ENCODE measurements at regions of chr6 and their contacts with region 1.

Region 1: GRCh38 chr6:168895102-168895812 is 358.4 kb downstream of the THBS2 start:
- DNase-seq: peak; percentile 87
- ATAC-seq: peak; percentile 87

Region 2: DNA sequence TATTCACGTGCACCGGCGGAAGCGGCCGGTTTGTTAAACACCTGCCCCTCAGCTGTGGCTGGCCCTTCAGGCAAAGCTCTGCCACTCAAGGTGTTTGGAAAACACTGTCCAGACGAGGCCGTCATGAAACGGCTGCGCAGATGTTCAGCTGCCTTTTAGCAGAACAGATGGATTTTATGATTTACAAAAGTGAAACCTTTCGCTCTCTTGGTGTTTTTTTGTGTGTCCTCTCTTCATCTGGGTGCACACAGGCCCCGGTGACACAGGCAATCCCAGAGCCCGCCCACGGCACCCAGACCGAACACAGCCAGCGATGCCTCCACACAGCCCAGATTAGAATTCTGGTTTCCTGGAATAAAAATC is 57.2 kb before region 1 on chr6:
- intact Hi-C with region 1: no loop called
- DNase-seq: no peak
- ATAC-seq: peak; percentile 45

Region 3: GRCh38 chr6:168937054-168937453 is 41.8 kb after region 1 on chr6:
- intact Hi-C with region 1: no loop called
- DNase-seq: no peak
- ATAC-seq: no peak

Region 4: GRCh38 chr6:169058634-169059033 is 163.4 kb after region 1 on chr6:
- intact Hi-C with region 1: no loop called
- DNase-seq: no peak
- ATAC-seq: no peak

Region 5: DNA sequence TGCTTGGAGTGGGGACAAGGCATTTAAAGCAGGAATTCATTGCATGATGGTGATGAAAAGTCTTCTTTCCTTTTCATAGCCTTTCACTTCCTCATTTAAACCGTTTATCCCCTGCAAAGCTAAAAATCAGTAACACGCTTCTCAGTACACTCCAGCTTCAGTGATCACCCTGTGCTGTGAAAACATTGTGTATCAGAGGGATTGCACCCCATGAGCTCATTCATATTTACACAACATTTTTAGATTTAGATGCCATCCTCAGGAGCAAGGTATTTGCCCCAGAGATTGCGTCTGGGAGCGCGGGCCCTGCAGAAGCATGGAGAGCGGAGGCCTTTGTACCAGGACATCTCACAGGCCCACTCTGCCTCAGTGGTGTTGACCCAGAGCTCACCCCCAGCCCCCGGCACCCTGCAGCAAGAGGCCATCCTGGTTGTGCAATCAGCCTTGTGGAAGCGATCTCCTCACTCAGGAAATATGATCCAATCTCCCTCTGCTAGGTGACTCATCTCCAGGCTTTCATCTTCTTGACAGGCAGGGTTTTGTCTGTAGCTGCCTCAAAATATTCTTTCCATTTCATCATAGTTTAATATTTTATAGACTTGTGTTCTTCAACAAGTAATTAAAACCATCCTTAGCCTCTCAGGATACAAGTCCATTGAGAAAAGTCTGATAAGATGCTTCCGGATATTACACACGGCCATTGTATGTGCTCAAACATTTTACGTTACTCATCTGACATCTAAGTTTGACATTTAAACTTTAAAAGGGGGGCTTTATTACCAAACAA is 397.3 kb after region 1 on chr6:
- intact Hi-C with region 1: no loop called
- DNase-seq: peak; percentile 45
- ATAC-seq: peak; percentile 49

Region 6: GRCh38 chr6:169529931-169530751 is 634.9 kb after region 1 on chr6:
- intact Hi-C with region 1: loop called (anchors 10 kb)
- DNase-seq: peak; percentile 34
- ATAC-seq: peak; percentile 54

Measured in left ventricle myocardium superior (tissue), 1 donor.